ENCODE measurements at regions of chr18 and their contacts with region 1.

Region 1: DNA sequence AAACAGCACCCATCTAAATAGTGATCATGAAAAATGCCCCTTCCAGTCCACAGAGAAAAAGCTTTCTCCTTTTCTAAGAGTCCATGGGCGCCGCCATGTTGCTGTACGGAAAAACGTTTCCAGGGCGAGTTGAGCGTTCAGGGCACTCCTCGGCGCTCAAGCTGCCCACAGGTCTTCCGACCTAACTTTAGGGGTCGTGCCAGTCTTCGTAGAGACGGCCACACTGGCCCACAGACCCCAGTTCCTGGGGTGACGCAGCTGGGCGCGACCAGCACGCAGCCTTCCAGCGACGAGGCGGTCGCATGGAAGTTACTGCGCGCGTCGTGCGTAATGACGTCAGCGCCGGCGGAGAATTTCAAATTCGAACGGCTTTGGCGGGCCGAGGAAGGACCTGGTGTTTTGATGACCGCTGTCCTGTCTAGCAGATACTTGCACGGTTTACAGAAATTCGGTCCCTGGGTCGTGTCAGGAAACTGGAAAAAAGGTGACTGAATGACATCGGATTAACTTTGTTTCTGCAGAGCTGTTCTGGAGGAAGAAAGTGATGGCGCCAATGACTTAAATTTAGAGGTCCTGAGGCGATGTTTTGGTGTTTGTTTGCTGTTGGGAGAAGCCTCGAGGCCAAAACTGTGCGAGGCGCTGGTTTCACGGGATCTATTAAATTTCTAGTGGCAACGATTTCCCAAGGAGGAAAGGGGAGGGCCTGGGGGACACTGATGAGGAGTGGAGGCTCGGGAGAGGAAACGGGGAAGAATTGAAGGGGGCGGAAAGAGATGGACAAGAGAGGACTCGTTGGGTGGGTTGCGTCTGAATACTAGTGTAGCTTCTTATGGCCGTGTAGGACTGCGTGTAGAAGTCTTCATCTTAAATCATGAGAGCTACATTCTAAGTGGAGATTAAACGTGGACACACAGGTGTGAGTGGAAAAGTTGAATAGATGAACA is at the starts of genes METTL4 and NDC80:
- DNase-seq: peak; percentile 77 to 81
- H3K4me3 ChIP-seq: peak within 1 kb of the TSS; percentile 24 to 73 (median 52)
- H3K27ac ChIP-seq: peak within 1 kb of the TSS; percentile 98 to 99 (median 99)
- H3K4me1 ChIP-seq: peaks cover 5 to 13% of the 10 kb centered on the region in 2 donors
- H3K27me3 ChIP-seq: no peaks in the 10 kb centered on the region
- CTCF ChIP-seq: peak in 1 of 6 experiments; percentile 0
- POLR2A ChIP-seq: peak in 1 of 2 donors; percentile 71
- total RNA-seq, gene METTL4: 9.9 to 21.8 (median 16.5) TPM
- total RNA-seq, gene NDC80: 0.33 to 1.4 (median 0.81) TPM in 3 of 4 donors, not detected in the other

Region 2: GRCh38 chr18:2655178-2655953 is 83.9 kb after region 1 on chr18 and contains the start of gene SMCHD1:
- intact Hi-C with region 1: loop called (anchors 10 kb)
- DNase-seq: peak; percentile 93 to 94
- H3K4me3 ChIP-seq: peak within 1 kb of the TSS; percentile 51 to 95 (median 84)
- H3K27ac ChIP-seq: peak within 1 kb of the TSS; percentile 90 to 95 (median 95)
- H3K4me1 ChIP-seq: peaks cover 15 to 17% of the 10 kb centered on the region in 2 donors
- H3K27me3 ChIP-seq: no peaks in the 10 kb centered on the region
- CTCF ChIP-seq: peak in 1 of 6 experiments; percentile 9
- POLR2A ChIP-seq: peak; percentile 11 to 93
- total RNA-seq, gene SMCHD1: 70.7 to 125 (median 76.8) TPM

Measured in thyroid gland (tissue), 4 donors.